PC-3 (cell line): ENCODE measurements at regions of chr3 and their contacts with region 1.

Region 1: DNA sequence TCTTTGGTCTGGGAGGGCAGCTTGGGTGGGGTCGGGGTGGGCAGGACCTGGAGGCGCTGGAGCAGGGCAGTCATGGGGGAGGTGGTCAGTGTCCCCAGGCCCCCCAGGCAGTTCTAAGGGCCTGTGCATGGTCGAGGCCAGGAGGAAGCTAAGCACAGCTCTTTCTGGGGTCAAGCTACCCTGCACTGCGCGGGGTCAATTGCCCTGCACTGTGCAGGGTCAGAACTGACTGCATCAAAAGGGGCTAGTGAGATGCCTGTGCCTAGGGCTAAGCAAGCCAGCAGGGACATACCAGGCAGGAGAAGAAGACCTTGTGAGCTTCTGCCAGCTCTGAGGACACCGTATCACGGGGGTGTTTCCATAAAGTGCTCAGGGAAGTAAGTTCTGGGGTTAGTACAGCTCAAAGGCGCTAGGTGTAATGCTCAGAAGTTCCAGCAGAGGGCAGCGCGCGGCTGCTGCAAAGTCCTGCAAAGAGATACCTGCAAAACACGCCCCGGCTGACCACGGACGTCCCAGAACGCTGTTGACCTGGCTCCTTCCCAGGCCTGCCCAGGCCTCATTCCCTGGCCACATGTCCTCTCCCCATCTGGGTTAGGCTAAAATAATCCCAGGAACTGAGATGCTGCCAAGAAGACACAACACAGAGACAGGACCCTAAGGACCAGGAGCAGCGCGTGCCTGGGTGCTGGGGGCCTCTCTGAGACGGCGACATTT is 18.8 kb upstream of the IQSEC1 start:
- DNase-seq: peak; percentile 95
- ATAC-seq: peak; percentile 79
- H3K4me3 ChIP-seq: peak overlapping the region; percentile 22; the same call in 1 of the 2 replicates
- H3K27ac ChIP-seq: peak overlapping the region; percentile 83
- H3K4me1 ChIP-seq: peaks cover 15% of the 10 kb centered on the region
- H3K27me3 ChIP-seq: no peaks in the 10 kb centered on the region
- CTCF ChIP-seq: peak; percentile 94

Region 2: DNA sequence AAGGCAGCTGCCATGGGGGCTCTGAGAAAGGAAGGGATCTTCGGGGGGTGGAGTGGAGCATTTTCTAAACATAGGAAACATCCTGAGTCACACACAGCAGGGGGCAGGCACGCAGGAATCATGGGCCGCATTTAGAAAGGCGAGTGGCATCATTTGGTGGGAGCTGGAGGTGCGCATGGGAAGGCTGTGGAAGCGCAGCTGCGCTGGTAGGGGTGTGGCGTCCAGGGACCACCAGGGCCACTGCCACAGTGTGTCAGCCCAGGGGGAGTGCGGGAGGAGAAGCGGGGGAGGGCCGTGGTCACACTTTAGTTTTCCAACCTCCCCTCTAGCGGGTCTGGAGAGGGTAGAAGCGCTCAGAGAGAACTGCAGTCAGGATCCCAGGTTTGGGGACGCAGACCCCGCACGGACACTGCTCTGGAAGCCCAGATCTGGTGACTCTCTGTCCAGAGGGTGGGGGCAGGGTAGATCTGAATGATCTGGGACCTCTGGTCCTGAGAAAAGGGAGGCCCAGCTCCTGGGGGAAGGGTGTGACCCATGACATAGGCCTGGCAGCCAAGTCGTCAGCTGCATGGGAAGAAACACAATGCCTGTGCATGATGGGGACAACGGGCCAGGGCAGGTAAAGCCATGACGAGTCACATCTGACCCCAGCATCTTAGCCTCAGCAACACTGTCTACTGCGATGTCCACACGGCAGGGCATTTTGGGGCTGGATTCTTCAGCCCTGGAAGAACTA is 69.1 kb after region 1 on chr3:
- CTCF ChIA-PET with region 1: interaction called, 3 read pairs
- POLR2A ChIA-PET with region 1: no interaction called
- intact Hi-C with region 1: loop called (anchors 2 kb)
- DNase-seq: no peak
- ATAC-seq: peak; percentile 21
- H3K4me3 ChIP-seq: no peak overlapping the region
- H3K27ac ChIP-seq: peak overlapping the region; percentile 67
- H3K4me1 ChIP-seq: peaks cover 27% of the 10 kb centered on the region
- H3K27me3 ChIP-seq: no peaks in the 10 kb centered on the region
- CTCF ChIP-seq: peak; percentile 42; the same call in 1 of the 2 replicates

Region 3: DNA sequence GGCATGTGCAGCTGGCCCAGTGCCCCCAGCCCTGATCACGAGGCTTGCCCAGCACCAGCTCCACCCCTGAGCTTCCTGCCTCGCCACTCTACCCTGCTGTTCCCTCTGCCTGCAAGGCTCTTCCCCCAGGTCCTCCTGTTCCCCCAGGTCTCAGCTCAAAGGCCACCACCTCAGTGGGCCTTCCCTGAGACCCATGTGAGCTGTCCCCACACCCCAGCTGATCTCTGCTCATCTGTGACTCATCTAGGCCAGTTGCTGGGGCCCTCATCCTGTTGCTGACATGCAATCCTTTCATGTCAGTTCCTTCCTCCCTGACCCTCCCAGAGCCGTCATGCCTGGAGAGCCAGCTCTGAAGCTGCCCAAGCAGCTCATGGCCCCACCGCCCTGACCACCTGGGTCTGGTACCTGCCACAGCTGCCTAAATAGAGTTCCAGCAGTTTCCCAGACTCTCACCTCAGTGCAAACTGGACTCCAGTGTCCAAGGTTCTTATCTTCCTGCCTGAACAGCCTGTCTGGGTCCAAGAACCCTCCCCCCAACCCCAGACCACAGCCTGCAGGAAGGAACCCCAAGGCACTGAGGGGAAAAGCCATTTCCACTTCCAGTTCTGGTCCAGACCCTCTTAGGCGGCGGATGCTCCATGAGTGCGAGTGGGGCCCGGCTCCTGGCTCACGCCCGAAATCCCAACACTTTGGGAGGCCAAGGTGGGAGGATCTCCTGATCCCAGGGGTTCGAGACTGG is 97.8 kb after region 1 on chr3:
- CTCF ChIA-PET with region 1: interaction called, 4 read pairs
- POLR2A ChIA-PET with region 1: no interaction called
- intact Hi-C with region 1: loop called (anchors 1 kb)
- DNase-seq: peak; percentile 84
- ATAC-seq: peak; percentile 77
- H3K4me3 ChIP-seq: no peak overlapping the region
- H3K27ac ChIP-seq: peak overlapping the region; percentile 81
- H3K4me1 ChIP-seq: peaks cover 45% of the 10 kb centered on the region
- H3K27me3 ChIP-seq: no peaks in the 10 kb centered on the region
- CTCF ChIP-seq: no peak

Region 4: GRCh38 chr3:13229273-13229949 is 137.4 kb after region 1 on chr3:
- CTCF ChIA-PET with region 1: interaction called, 12 read pairs
- POLR2A ChIA-PET with region 1: no interaction called
- intact Hi-C with region 1: loop called (anchors 5 kb)
- DNase-seq: peak; percentile 92
- ATAC-seq: peak; percentile 98
- H3K4me3 ChIP-seq: no peak overlapping the region
- H3K27ac ChIP-seq: 0 out of 2 replicates have a peak overlapping the region, but pooled peaks have one; percentile 10
- H3K4me1 ChIP-seq: peaks cover 12% of the 10 kb centered on the region
- H3K27me3 ChIP-seq: no peaks in the 10 kb centered on the region
- CTCF ChIP-seq: peak; percentile 92

Region 5: DNA sequence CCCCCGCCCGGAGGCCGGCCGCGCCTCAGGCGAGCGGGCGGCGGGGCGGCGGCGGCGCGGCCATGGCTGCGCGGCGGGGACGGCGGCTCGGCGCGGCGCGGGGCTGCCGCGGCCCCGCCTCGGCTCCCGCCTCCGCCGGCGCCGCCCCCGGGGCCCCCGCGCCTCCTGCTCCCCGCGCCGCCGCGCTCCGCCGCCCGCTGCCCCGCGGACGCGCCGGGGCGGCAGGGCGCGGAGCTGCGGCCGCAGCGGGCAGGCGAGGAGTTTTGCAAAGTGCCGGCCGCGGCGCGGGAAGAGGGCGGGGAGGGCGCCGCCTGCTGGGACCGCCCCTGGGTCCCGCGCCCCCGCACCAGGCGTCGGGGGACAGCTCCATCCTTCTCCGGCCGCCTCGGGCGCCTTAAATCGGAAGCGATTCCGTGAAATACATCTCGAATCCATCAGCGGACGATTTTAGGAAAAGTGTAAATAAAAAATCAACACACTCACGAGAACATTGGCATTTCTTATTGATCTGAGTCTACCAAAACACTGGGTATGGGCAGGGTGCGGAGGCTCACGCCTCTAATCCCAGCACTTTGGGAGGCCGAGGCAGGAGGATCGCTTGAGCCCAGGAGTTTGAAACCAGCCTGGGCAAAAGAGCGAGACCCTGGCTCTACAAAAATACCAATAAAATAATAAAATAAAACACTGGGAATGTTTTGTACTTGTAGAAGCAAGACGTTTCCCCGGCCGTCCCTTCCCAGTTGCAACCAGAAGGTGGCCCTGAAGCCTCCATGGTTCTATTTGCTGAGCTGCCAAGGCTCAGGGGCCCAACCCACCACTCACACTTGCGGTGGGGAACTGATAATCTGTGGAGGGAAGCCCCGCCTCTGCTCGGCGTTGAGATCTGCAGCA is 191.2 kb after region 1 on chr3:
- CTCF ChIA-PET with region 1: interaction called, 5 read pairs
- POLR2A ChIA-PET with region 1: no interaction called
- intact Hi-C with region 1: loop called (anchors 1 kb)
- DNase-seq: peak; percentile 63
- ATAC-seq: peak; percentile 44
- H3K4me3 ChIP-seq: peak overlapping the region; percentile 84
- H3K27ac ChIP-seq: no peak overlapping the region
- H3K4me1 ChIP-seq: peaks cover 15% of the 10 kb centered on the region
- H3K27me3 ChIP-seq: no peaks in the 10 kb centered on the region
- CTCF ChIP-seq: peak; percentile 63

Region 6: DNA sequence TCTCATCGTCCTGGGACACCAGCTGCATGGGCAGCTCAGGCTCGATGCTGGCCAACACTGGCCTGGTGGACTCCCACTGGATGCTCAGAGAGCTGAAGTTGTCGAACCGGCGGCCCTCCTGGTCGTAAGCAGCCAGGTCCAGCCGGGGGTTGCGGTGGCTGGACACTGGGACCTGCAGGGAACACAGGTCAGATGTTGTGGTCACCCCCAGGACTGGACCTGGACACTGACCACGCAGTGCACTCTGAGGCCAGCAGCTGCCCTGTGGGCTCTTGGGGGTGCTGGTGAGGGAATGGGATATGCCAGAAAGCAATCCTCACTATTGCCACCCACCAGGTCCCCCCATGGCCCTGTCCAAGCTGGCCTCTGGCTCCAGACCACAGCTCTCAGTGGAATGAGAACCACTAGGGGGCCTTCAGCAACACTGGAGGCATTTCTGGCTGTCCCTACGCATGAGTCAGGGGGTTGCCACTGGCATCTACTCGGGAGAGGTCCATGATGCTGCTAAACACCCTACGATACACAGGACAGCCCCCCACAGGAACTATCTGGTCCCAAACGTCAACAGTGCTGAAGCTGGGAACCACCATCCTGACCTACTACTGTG is 262.0 kb after region 1 on chr3:
- CTCF ChIA-PET with region 1: interaction called, 14 read pairs
- POLR2A ChIA-PET with region 1: no interaction called
- intact Hi-C with region 1: no loop called
- DNase-seq: peak; percentile 43
- ATAC-seq: peak; percentile 78
- H3K4me3 ChIP-seq: no peak overlapping the region
- H3K27ac ChIP-seq: no peak overlapping the region
- H3K4me1 ChIP-seq: peaks cover 8% of the 10 kb centered on the region
- H3K27me3 ChIP-seq: no peaks in the 10 kb centered on the region
- CTCF ChIP-seq: peak; percentile 65